Panc1 (cell line): ENCODE measurements at regions of chr17 and their contacts with region 1.

Region 1: GRCh38 chr17:49076573-49077384 is 55.8 kb upstream of the B4GALNT2 start:
- DNase-seq: peak; percentile 45
- ATAC-seq: peak; percentile 80
- H3K4me3 ChIP-seq: no peak overlapping the region
- H3K27ac ChIP-seq: no peak overlapping the region
- H3K4me1 ChIP-seq: no peaks in the 10 kb centered on the region
- H3K27me3 ChIP-seq: no peaks in the 10 kb centered on the region
- CTCF ChIP-seq: no peak

Region 2: GRCh38 chr17:49035470-49036269 is 41.1 kb before region 1 on chr17:
- CTCF ChIA-PET with region 1: no interaction called
- POLR2A ChIA-PET with region 1: no interaction called
- in situ Hi-C with region 1: no loop called
- intact Hi-C with region 1: no loop called
- DNase-seq: peak; percentile 27
- ATAC-seq: peak; percentile 40
- H3K4me3 ChIP-seq: no peak overlapping the region
- H3K27ac ChIP-seq: no peak overlapping the region
- H3K4me1 ChIP-seq: no peaks in the 10 kb centered on the region
- H3K27me3 ChIP-seq: no peaks in the 10 kb centered on the region
- CTCF ChIP-seq: peak; percentile 98

Region 3: GRCh38 chr17:49093082-49093741 is 16.4 kb after region 1 on chr17:
- CTCF ChIA-PET with region 1: no interaction called
- POLR2A ChIA-PET with region 1: no interaction called
- in situ Hi-C with region 1: no loop called
- intact Hi-C with region 1: no loop called
- DNase-seq: no peak
- ATAC-seq: no peak
- H3K4me3 ChIP-seq: no peak overlapping the region
- H3K27ac ChIP-seq: no peak overlapping the region
- H3K4me1 ChIP-seq: no peaks in the 10 kb centered on the region
- H3K27me3 ChIP-seq: no peaks in the 10 kb centered on the region
- CTCF ChIP-seq: no peak

Region 4: DNA sequence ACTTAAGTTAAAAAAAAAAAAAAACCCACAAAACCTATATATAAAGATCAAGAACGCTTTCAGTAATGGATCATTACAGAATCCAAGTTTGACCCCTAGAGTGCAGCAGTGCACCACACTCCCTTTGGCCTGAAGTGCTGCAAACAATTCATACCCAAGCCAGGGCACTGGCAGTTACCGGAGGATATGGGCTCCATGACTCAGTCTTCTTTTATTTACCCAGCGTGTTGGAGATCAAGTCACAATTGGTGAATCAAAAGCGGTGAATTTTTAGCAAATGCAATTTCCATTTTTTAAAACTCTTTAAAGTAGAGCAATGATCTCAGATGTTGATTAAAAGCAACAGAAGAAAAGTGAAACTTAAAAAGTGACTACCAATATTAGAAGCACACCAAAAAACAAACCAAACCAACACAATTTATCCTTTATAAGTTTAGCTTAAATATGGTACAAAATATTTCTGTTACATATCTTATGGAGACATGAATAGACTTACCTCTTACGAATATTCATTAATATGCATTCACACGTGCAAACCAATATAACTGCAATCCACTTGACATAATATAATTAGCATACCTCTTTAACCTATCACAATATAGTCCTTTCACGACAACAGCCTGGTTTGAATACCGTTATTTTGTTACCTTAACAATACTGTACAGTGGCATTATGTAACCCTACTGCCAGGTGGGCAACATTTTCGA is 238.9 kb after region 1 on chr17:
- CTCF ChIA-PET with region 1: interaction called, 11 read pairs
- POLR2A ChIA-PET with region 1: no interaction called
- in situ Hi-C with region 1: no loop called
- intact Hi-C with region 1: no loop called
- DNase-seq: peak; percentile 73
- ATAC-seq: peak; percentile 99
- H3K4me3 ChIP-seq: peak overlapping the region in 1 of 2 experiments; percentile 19; a peak in 2 of 4 replicates
- H3K27ac ChIP-seq: peak overlapping the region; percentile 58
- H3K4me1 ChIP-seq: peaks cover 23% of the 10 kb centered on the region
- H3K27me3 ChIP-seq: no peaks in the 10 kb centered on the region
- CTCF ChIP-seq: peak; percentile 94